ENCODE measurements at regions of chr6 and their contacts with region 1.

Region 1: GRCh38 chr6:160030103-160030502 is 61.2 kb downstream of the IGF2R start:
- DNase-seq: peak; percentile 95
- H3K4me3 ChIP-seq: peak overlapping the region in 3 of 4 donors; percentile 1 to 21 (median 15)
- H3K27ac ChIP-seq: peak overlapping the region; percentile 73 to 79 (median 76)
- H3K4me1 ChIP-seq: peaks cover 17 to 20% (median 18%) of the 10 kb centered on the region in 4 donors
- H3K27me3 ChIP-seq: no peaks in the 10 kb centered on the region
- CTCF ChIP-seq: peak in 1 of 3 experiments; percentile 14
- EP300 ChIP-seq: no peak
- POLR2A ChIP-seq: no peak

Region 2: GRCh38 chr6:159862103-159862502 is 168.0 kb before region 1 on chr6:
- intact Hi-C with region 1: loop called (anchors 10 kb)
- DNase-seq: no peak
- H3K4me3 ChIP-seq: no peak overlapping the region
- H3K27ac ChIP-seq: no peak overlapping the region
- H3K4me1 ChIP-seq: no peaks in the 10 kb centered on the region
- H3K27me3 ChIP-seq: peaks cover 0 to 5% (median 0%) of the 10 kb centered on the region in 4 donors
- CTCF ChIP-seq: no peak
- EP300 ChIP-seq: no peak
- POLR2A ChIP-seq: no peak

Region 3: GRCh38 chr6:159968440-159969203 is 61.5 kb before region 1 on chr6 and contains the start of gene IGF2R:
- intact Hi-C with region 1: loop called (anchors 5 kb)
- DNase-seq: peak; percentile 98
- H3K4me3 ChIP-seq: peak within 1 kb of the TSS; percentile 77 to 98 (median 96)
- H3K27ac ChIP-seq: peak within 1 kb of the TSS; percentile 88 to 95 (median 90)
- H3K4me1 ChIP-seq: peaks cover 33 to 46% (median 44%) of the 10 kb centered on the region in 4 donors
- H3K27me3 ChIP-seq: peaks cover 0 to under 1% (median 0%) of the 10 kb centered on the region in 4 donors
- CTCF ChIP-seq: no peak
- EP300 ChIP-seq: no peak
- POLR2A ChIP-seq: peak; percentile 91
- total RNA-seq, gene IGF2R: 43.6 to 75.3 (median 58.4) TPM

Region 4: DNA sequence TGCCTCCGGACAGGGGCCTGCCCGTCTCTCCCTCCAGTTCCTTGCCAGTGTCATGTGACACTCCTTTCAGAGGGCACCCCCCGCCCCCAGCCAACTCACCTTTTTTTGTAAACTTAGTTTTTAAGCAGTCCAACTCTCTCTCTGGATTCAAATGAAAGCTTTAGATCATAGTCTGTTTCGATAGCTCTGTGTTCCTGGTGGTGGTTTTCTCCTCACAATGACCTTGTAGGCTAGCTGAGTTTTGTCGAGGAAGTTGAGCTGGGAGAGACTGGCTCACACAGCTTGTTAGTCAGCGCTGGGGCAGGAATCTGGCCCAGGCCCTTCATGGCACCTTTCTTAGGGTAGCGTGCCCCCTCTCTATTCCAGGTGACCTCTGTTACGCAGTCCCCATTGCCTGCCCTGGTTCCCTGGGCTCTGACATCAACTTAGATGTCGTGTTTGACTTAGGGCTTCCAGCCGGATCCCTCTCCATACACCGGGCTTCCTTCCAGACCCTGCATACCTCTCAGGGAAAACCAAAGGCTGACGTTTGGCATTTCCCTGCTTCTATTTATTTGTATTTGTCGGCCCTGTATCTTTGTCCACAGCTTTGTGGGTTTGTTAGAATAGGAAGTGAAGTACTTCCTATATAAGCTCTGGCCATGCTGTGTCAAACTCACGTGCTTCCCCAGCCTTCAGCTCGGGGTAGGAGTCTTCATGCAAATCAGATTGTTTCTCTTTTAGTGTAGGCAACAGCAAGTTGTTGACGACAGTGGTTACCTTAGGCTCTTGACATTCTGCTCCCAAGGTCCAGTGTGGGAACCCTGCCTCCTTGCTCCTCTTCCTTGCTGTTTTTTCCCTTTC is 48.5 kb before region 1 on chr6:
- intact Hi-C with region 1: loop called (anchors 5 kb)
- DNase-seq: peak; percentile 74
- H3K4me3 ChIP-seq: peak overlapping the region in 3 of 4 donors; percentile 0 to 3 (median 2)
- H3K27ac ChIP-seq: peak overlapping the region; percentile 45 to 66 (median 60)
- H3K4me1 ChIP-seq: peaks cover 82 to 90% (median 85%) of the 10 kb centered on the region in 4 donors
- H3K27me3 ChIP-seq: no peaks in the 10 kb centered on the region
- CTCF ChIP-seq: no peak
- EP300 ChIP-seq: no peak
- POLR2A ChIP-seq: no peak

Region 5: GRCh38 chr6:160077526-160077925 is 47.4 kb after region 1 on chr6:
- intact Hi-C with region 1: no loop called
- DNase-seq: no peak
- H3K4me3 ChIP-seq: no peak overlapping the region
- H3K27ac ChIP-seq: no peak overlapping the region
- H3K4me1 ChIP-seq: no peaks in the 10 kb centered on the region
- H3K27me3 ChIP-seq: no peaks in the 10 kb centered on the region
- CTCF ChIP-seq: no peak
- EP300 ChIP-seq: no peak
- POLR2A ChIP-seq: no peak

Region 6: DNA sequence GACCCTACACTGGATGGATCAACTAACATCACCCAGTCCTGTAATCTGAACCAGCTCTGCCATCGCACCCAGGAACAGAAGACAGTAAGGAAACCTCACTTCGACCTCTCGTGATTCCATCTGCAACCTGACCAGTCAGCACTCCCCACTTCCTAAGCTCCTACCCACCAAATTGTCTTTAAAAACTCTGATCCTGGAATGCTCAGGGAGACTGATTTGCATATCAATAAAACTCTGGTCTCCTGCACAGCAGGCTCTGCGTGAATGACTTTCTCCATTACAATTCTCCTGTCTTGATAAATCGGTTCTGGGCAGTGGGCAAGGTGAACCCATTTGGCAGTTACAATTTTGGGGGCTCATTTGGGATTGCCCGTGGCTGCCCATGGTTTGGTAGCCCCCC is 1262.0 kb after region 1 on chr6:
- intact Hi-C with region 1: no loop called
- DNase-seq: no peak
- H3K4me3 ChIP-seq: no peak overlapping the region
- H3K27ac ChIP-seq: no peak overlapping the region
- H3K4me1 ChIP-seq: no peaks in the 10 kb centered on the region
- H3K27me3 ChIP-seq: no peaks in the 10 kb centered on the region
- CTCF ChIP-seq: no peak
- EP300 ChIP-seq: no peak
- POLR2A ChIP-seq: no peak